PC-3 (cell line): ENCODE measurements at regions of chr9 and their contacts with region 1.

Region 1: GRCh38 chr9:4315582-4316215 is 15.8 kb upstream of the GLIS3 start:
- DNase-seq: peak; percentile 73
- ATAC-seq: peak; percentile 96
- H3K4me3 ChIP-seq: no peak overlapping the region
- H3K27ac ChIP-seq: no peak overlapping the region
- H3K4me1 ChIP-seq: no peaks in the 10 kb centered on the region
- H3K27me3 ChIP-seq: no peaks in the 10 kb centered on the region
- CTCF ChIP-seq: peak; percentile 80

Region 2: GRCh38 chr9:4339357-4339756 is 23.7 kb after region 1 on chr9:
- CTCF ChIA-PET with region 1: interaction called, 3 read pairs
- POLR2A ChIA-PET with region 1: no interaction called
- intact Hi-C with region 1: loop called (anchors 1 kb)
- DNase-seq: peak; percentile 87
- ATAC-seq: peak; percentile 76
- H3K4me3 ChIP-seq: no peak overlapping the region
- H3K27ac ChIP-seq: no peak overlapping the region
- H3K4me1 ChIP-seq: no peaks in the 10 kb centered on the region
- H3K27me3 ChIP-seq: no peaks in the 10 kb centered on the region
- CTCF ChIP-seq: peak; percentile 89

Region 3: DNA sequence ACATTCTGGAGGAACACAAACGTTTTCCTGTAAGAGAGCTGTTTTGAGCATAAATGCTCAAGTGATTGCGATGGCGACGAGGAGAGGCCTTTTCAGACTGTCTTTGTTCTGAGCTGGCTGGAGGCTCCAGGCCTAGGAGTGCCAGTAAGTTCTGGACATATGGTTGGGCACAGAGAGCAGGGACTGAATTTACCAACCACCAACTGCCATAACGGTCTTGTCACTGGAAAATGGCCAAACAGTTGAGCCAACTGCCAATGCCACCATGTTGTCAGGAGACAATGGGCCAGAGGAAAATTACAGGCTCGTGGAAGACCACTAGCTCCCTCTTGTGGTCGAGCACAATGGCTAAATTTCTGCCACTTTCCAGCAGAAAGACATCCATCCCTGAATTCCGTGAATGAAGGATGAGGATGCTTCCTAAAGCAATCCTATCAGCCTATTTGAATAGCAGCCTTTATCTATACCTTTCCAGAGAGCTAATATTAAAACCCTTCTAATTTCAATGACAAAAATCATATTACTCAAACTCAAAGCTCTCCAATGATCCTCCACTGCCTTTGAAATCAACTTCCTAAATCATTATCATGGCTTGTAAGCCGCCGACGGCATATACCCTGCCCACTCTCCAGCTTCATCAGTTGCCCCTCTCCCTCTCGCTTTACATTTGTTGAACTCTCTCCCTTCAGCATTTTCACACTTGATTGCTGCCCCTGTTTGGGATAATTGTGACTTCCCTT is 51.1 kb after region 1 on chr9:
- CTCF ChIA-PET with region 1: no interaction called
- POLR2A ChIA-PET with region 1: interaction called, 3 read pairs
- intact Hi-C with region 1: loop called (anchors 2 kb)
- DNase-seq: peak; percentile 74
- ATAC-seq: 0 out of 2 replicates have a peak, but pooled peaks have one; percentile 14
- H3K4me3 ChIP-seq: no peak overlapping the region
- H3K27ac ChIP-seq: no peak overlapping the region
- H3K4me1 ChIP-seq: peaks cover 8% of the 10 kb centered on the region; the same call in 1 of the 2 replicates
- H3K27me3 ChIP-seq: no peaks in the 10 kb centered on the region
- CTCF ChIP-seq: peak; percentile 80